Activated CD4-positive, alpha-beta T cell treated with anti-CD3 and anti-CD28 coated beads for 36 hours (primary cell): ENCODE measurements at regions of chr14 and their contacts with region 1.

Region 1: DNA sequence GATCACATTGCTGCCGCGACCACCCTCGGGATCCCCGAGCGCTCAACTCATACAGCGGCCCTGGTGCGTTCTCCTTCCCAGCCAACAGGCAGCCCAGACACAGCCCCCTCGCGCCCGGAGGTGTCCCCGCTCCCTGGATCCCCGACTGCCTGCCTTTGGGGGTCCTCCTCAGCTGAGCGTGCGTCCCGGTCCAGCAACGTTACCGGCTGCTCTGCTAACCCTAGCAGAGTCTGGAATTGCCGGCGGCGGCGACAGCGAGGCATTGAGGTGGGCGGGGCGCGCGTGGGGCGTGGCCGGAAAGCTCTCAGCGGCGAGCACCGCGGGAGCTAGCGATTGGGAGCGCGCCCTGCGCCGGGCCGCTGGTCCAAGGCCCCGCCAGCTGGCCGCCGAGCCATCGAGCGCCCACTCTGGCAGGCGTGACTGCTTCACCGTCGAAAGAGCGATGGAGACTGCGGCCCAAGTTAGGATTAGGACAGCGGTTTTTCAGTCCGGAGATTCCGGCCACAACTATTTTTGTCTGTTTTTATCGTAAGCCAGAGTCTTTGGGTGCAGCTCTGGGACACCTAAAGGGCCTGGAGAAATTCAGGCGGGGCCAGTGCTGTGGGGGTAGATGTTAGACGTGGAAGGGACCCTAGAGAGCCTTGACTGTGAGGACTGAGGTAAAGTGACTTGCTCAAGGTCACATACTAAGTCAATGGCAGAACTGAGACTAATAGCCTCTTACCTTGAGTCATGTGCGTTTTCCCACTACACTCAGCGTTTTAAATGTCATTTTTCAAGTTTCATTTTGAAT is at the start of gene HEATR5A:
- DNase-seq: peak; percentile 94
- ATAC-seq: peak; percentile 91
- H3K4me3 Mint-ChIP-seq: peak within 1 kb of the TSS; percentile 94
- H3K27ac Mint-ChIP-seq: peak within 1 kb of the TSS; percentile 88
- H3K4me1 Mint-ChIP-seq: peaks cover 25% of the 10 kb centered on the region
- H3K27me3 Mint-ChIP-seq: peaks cover 3% of the 10 kb centered on the region
- total RNA-seq, gene HEATR5A: 8.5 to 9.4 TPM

Region 2: DNA sequence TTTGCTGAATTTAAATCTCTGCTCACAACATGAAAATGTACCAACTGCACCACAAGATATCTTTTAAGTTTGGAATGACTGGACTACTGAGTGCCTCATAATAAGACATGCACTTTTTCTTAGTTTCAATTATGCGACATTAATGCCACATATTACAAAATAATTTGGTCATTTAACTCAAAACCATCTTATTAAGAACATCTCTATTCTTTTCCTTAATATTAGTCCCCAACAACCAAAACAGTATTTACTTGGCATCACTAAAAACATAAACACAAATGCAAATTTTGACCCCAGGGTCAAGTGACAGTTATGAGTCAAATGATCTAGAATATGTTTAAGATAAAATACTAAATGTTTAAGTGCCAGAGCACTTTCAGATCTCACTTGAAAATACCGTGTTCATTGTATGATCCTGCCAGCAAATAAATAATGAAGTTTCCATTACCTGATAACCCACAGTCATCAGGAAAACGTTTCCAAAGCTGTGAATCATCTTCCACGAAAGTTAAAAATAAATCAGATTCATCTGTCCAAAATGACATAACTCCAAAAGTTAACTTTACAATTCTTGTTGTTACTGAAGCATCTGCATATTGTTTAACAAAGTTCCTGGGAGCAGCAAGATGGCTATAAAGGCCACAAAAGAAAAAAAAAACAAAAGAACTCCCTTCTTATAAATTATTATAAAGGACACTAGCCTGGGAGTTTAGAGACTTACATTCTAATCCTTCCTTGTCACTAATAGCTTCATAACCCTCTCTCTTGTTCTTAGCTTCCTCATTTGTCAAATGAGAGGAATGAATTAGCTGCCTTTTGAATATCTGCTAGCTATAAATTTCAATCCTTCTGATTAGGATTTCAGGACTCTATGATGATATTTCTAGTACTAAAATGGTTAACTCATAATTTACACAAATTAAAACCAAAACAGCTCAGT is 425.6 kb before region 1 on chr14:
- CTCF ChIA-PET with region 1: no interaction called
- POLR2A ChIA-PET with region 1: no interaction called
- intact Hi-C with region 1: loop called in 1 of 2 experiments (anchors 1 kb)
- DNase-seq: no peak
- ATAC-seq: peak; percentile 61
- H3K4me3 Mint-ChIP-seq: peak overlapping the region; percentile 38
- H3K27ac Mint-ChIP-seq: peak overlapping the region; percentile 85
- H3K4me1 Mint-ChIP-seq: peaks cover 43% of the 10 kb centered on the region
- H3K27me3 Mint-ChIP-seq: no peaks in the 10 kb centered on the region

Region 3: DNA sequence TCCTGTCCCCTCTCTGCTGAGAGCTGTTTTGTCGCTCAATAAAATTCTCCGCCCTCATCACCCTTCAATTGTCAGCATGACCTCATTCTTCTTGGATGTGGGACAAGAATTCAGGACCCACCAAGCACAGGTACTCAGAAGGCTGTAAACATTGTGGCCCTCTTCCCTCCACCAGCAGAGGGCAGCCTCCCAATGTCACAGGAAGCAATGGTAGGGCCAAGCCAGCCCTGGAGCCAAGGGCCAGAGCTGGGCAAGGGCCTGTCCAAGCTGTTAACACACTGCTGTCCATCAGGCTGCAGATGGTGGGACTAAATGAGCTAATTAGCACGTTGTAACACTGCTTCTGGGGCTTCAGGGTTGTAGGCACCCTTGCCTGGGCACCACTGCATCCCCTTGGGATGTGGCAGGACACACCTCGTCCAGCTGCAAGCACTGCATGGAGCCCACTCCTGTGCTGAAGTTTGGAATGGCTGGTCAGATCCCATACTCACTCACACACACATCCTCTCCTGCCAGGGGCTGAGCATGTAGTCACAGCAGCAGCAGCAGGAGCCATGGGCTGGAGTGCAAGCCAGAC is 150.2 kb before region 1 on chr14:
- CTCF ChIA-PET with region 1: no interaction called
- POLR2A ChIA-PET with region 1: no interaction called
- intact Hi-C with region 1: loop called in 1 of 2 experiments (anchors 10 kb)
- DNase-seq: peak; percentile 58
- ATAC-seq: no peak
- H3K4me3 Mint-ChIP-seq: no peak overlapping the region
- H3K27ac Mint-ChIP-seq: no peak overlapping the region
- H3K4me1 Mint-ChIP-seq: peaks cover 10% of the 10 kb centered on the region
- H3K27me3 Mint-ChIP-seq: no peaks in the 10 kb centered on the region

Region 4: DNA sequence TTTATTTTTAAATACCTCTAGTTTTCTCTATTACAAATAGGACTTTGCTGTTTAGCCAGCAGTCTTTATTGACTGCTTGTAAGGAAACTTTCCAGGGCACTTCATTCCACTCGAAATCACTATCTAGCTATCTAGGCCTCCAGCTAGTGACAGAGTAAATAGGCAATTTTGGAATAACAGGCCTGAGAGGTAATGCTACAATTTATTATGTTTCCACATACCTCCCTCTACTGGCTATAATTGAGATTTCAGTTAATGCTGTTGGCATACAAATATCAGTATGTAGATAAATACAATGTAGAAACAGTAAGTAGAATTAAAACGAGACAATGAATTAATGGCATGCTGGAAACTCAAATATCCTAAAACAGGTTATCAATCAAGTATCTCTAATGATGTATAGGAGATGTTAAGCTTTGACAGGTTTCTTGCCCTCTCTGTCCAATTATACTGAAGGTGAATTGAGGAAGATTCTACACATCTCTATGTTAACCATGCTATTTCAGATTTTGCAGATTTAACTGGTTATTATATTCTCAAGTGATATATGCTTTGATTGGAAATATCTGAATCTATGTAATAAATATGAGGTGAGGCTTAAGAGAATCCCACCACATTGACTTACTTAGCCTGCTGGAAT is 29.6 kb after region 1 on chr14:
- CTCF ChIA-PET with region 1: interaction called, 19 read pairs
- POLR2A ChIA-PET with region 1: interaction called, 6 read pairs
- intact Hi-C with region 1: no loop called
- DNase-seq: no peak
- ATAC-seq: no peak
- H3K4me3 Mint-ChIP-seq: no peak overlapping the region
- H3K27ac Mint-ChIP-seq: no peak overlapping the region
- H3K4me1 Mint-ChIP-seq: peaks cover 5% of the 10 kb centered on the region
- H3K27me3 Mint-ChIP-seq: no peaks in the 10 kb centered on the region

Region 5: GRCh38 chr14:31561155-31561846 is 140.8 kb after region 1 on chr14 and contains the start of gene NUBPL:
- CTCF ChIA-PET with region 1: no interaction called
- POLR2A ChIA-PET with region 1: interaction called, 3 read pairs
- intact Hi-C with region 1: loop called in 1 of 2 experiments (anchors 1 kb)
- DNase-seq: peak; percentile 98
- ATAC-seq: peak; percentile 96
- H3K4me3 Mint-ChIP-seq: peak within 1 kb of the TSS; percentile 92
- H3K27ac Mint-ChIP-seq: peak within 1 kb of the TSS; percentile 95
- H3K4me1 Mint-ChIP-seq: peaks cover 23% of the 10 kb centered on the region
- H3K27me3 Mint-ChIP-seq: peaks cover 6% of the 10 kb centered on the region
- total RNA-seq, gene NUBPL: 9.5 to 14.9 TPM